ENCODE measurements at regions of chr13 and their contacts with region 1.

Region 1: DNA sequence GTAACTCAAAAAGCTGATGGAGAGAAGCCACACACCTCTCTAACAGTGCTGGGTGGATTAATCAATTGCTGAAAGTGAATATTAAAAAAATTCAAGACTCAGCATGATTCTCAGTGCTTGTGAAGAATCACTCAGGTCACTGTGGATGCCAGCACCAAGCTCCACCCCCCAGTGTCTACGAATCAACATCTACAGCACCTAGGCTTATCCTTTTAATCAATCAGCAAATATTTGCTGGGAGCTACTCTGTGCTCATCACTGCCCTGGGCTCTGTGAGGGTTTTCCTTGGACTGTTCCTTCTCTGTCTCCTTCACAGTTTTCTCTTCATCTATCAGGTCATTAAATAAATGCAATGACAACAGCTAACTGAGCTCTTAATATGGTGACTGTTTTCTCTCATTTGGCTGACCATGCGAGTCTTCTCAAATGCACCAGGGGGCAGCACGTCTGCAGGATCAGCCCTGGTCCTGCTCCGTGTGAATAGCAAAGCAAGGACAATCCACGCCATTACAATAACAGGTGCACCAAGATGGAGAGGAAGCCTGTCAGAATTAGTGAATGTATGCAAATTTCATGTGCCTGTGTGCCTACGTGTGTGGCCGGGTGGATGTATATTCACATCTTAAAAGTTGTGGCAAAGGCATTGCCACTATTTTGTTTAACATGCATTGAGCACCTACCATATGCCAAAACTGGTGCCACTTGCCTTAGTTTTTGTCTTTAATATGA is 14.6 kb upstream of the C13orf42 start:
- DNase-seq: peak in 1 of 2 experiments; percentile 41
- H3K4me3 ChIP-seq: no peak overlapping the region
- H3K27ac ChIP-seq: no peak overlapping the region
- H3K4me1 ChIP-seq: no peaks in the 10 kb centered on the region
- H3K27me3 ChIP-seq: peaks cover 19% of the 10 kb centered on the region; the same call in 1 of the 2 replicates
- CTCF ChIP-seq: peak; percentile 78

Region 2: DNA sequence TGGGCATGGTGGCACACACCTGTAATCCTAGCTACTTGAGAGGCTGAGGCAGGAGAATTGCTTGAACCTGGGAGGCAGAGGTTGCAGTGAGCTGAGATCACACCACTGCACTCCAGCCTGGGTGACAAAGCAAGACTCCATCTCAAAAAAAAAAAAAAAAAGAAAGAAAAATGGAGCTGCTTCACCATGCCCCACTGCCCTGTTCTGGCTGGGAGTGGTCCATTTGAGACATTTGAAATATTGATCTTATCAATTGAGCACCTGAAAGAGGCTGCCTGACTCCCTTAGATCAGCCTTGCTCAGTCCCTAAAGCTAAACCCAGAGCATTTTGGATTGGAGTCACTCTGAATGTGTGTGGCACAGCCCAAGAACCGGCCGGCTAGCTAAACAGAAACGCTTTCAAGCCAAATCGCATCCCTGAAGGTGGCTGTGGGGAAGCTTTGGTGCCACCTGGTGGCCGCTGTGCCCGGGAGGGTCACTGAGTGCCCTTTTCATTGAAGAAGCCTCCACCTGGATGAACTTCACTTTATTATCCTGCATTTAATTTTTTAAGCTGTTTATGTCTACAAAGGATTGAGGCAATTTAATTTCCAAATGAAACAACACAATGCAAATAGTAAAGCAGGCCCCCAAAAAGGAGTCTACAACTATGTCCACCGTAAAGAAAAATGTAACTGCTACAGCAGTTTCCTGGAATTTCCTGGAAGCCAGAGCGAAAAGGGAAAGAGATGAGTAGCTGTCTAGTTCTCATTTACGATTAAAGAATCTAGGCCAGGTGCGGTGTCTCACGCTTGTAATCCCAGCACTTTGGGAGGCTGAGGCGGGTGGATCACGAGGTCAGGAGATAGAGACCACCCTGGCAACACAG is 160.7 kb after region 1 on chr13:
- CTCF ChIA-PET with region 1: interaction called, 21 read pairs
- POLR2A ChIA-PET with region 1: no interaction called
- intact Hi-C with region 1: loop called (anchors 1 kb)
- DNase-seq: peak; percentile 39 to 70
- H3K4me3 ChIP-seq: no peak overlapping the region
- H3K27ac ChIP-seq: no peak overlapping the region
- H3K4me1 ChIP-seq: no peaks in the 10 kb centered on the region
- H3K27me3 ChIP-seq: peaks cover 50% of the 10 kb centered on the region
- CTCF ChIP-seq: peak; percentile 88

Region 3: DNA sequence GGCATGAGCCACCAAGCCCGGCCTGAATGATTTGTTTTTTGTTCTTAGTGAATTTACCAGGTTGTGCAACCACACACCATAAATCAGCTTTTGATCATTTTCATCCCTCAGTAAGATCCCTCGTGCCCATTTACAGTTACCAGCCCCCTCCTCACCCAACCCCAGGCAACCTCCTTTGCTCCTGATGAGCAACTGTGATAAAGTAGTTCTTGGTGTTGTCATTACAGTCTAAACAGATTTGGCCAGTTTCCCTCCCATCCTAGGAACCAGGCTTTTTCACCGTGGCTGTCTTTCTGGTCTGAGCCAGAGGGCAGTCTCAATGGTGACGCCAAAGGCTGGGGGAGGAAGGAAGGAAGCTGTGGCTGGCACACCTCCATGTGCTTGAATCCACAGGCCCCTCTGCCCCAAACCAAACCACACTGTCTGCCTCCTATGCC is 397.4 kb after region 1 on chr13:
- CTCF ChIA-PET with region 1: no interaction called
- POLR2A ChIA-PET with region 1: no interaction called
- intact Hi-C with region 1: no loop called
- DNase-seq: peak; percentile 49 to 55
- H3K4me3 ChIP-seq: no peak overlapping the region
- H3K27ac ChIP-seq: peak overlapping the region; percentile 95
- H3K4me1 ChIP-seq: peaks cover 57% of the 10 kb centered on the region
- H3K27me3 ChIP-seq: no peaks in the 10 kb centered on the region
- CTCF ChIP-seq: no peak

Region 4: DNA sequence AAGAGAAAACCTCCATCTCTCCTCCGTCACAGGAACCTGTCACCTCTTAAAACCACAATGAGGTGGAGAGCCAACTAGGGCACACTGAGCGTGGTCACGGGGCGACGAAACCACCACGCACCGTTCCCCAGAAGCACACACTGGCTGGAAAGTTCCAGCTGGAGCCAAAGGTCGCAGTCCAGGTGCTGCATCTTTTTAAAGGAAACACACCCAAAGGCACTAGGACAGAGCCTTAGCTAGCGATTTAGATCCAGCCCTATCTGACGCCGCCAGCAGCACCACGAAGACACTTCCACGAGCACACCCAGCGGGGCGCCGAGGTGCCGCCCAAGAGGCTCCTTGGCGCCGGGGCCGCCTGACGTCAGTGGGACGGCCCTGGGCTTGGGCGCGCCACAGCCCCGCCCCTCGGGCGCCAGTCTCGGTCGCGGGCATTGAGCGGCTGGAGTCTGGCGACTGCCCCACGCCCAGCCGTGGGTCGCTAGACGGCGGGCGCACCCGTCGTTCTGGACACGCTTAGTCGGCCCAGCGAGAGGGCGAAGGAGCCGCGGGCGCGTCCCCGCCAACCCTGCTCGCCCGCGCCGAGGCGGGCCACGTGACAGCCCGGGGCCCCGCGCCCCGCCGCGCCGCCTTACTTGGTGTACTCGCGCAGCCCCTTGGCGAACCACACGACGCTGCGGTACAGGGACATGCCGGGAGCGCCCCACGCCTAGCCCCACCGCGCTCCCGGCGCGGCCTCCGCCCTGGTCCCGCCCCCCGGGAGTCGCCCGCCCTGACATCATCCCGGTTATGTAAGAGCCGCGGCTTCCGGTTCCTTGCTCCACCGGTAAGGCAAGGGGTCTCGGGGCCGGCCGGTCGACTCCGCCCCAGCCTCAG is 678.0 kb after region 1 on chr13 and contains the start of gene DHRS12:
- CTCF ChIA-PET with region 1: no interaction called
- POLR2A ChIA-PET with region 1: no interaction called
- intact Hi-C with region 1: loop called (anchors 5 kb)
- DNase-seq: peak; percentile 60 to 83
- H3K4me3 ChIP-seq: peak within 1 kb of the TSS; percentile 69
- H3K27ac ChIP-seq: peak within 1 kb of the TSS; percentile 54
- H3K4me1 ChIP-seq: peaks cover 26% of the 10 kb centered on the region
- H3K27me3 ChIP-seq: no peaks in the 10 kb centered on the region
- CTCF ChIP-seq: no peak
- total RNA-seq, gene DHRS12: 6.9 and 11.9 TPM in 2 replicates

Region 5: DNA sequence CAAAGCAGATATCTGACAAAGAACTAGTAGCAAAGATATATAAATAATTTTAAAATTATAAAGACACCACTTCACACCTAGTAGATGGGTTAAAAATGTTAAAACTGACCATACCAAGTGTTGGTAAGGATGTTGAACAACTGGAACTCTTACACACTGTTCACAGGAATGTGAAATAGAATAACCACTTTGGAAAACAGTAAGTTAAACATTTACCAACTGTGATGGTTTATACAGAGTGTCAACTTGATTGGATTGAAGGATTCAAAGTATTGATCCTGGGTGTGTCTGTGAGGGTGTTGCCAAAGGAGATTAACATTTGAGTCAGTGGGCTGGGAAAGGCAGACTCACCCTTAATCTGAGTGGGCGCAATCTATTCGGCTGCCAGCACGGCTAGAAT is 918.0 kb after region 1 on chr13:
- CTCF ChIA-PET with region 1: no interaction called
- POLR2A ChIA-PET with region 1: no interaction called
- intact Hi-C with region 1: no loop called
- DNase-seq: no peak
- H3K4me3 ChIP-seq: no peak overlapping the region
- H3K27ac ChIP-seq: no peak overlapping the region
- H3K4me1 ChIP-seq: no peaks in the 10 kb centered on the region
- H3K27me3 ChIP-seq: no peaks in the 10 kb centered on the region
- CTCF ChIP-seq: no peak